Left ventricle myocardium inferior (tissue), 1 donor: ENCODE measurements at regions of chr3 and their contacts with region 1.

Region 1: DNA sequence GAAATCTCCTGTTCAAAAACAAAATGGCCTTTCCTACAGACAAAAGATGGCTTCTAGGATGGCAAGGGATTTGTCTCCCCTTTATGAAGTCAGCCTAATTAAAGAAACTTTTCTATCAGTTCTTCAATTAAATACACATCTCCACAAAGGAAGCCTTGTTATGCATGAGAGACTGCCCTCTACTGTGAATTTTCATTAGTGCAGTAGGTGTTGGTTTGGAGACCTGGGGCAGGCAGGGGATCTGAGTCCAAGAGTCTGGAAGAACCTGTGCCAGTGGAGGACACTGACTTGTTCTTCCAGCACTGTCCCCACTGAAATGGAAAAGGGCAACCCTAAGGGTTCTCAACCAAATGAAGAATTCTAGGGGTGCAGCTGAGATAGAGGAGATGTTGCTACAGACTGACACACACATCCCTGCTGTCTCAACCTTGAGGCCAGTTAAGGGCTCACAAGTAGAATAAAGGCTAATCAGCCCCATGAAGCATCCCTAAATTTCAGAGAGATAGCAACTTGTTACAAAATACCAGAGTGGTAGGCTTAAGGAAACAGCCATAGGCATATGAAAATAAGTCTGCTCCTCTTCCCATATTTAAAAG is 174.0 kb upstream of the PRICKLE2 start:
- DNase-seq: no peak
- H3K4me3 ChIP-seq: no peak overlapping the region
- H3K27ac ChIP-seq: no peak overlapping the region
- H3K4me1 ChIP-seq: no peaks in the 10 kb centered on the region
- H3K27me3 ChIP-seq: no peaks in the 10 kb centered on the region
- CTCF ChIP-seq: peak; percentile 90

Region 2: DNA sequence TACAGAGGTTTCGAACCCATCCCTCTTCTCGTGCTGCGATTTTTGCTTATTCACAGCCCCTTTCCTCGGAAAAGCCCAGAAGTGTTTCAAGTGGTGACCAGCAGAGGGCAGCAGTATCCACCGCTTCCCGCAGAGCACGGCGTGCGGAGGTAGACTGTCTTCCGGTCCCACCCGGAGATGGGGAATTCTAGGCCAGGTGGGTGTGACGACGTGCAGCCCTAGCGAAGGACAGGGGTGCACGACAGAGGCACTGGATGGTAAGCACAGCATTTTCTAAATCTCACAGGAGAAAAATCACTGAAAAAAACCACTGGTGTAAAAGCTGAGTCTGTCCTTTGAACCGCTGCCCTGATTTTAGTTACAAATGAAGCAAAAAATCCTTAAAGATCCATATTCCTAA is 368.6 kb before region 1 on chr3:
- intact Hi-C with region 1: loop called (anchors 1 kb)
- DNase-seq: peak; percentile 65
- H3K4me3 ChIP-seq: peak overlapping the region; percentile 55
- H3K27ac ChIP-seq: no peak overlapping the region
- H3K4me1 ChIP-seq: peaks cover 7% of the 10 kb centered on the region
- H3K27me3 ChIP-seq: peaks cover 25% of the 10 kb centered on the region
- CTCF ChIP-seq: peak; percentile 90

Region 3: GRCh38 chr3:64267721-64268604 is 131.3 kb before region 1 on chr3:
- intact Hi-C with region 1: loop called (anchors 10 kb)
- DNase-seq: peak; percentile 61
- H3K4me3 ChIP-seq: peak overlapping the region; percentile 77
- H3K27ac ChIP-seq: peak overlapping the region; percentile 87
- H3K4me1 ChIP-seq: peaks cover 59% of the 10 kb centered on the region
- H3K27me3 ChIP-seq: no peaks in the 10 kb centered on the region
- CTCF ChIP-seq: no peak